HepG2 (cell line): ENCODE measurements at regions of chr4 and their contacts with region 1.

Region 1: DNA sequence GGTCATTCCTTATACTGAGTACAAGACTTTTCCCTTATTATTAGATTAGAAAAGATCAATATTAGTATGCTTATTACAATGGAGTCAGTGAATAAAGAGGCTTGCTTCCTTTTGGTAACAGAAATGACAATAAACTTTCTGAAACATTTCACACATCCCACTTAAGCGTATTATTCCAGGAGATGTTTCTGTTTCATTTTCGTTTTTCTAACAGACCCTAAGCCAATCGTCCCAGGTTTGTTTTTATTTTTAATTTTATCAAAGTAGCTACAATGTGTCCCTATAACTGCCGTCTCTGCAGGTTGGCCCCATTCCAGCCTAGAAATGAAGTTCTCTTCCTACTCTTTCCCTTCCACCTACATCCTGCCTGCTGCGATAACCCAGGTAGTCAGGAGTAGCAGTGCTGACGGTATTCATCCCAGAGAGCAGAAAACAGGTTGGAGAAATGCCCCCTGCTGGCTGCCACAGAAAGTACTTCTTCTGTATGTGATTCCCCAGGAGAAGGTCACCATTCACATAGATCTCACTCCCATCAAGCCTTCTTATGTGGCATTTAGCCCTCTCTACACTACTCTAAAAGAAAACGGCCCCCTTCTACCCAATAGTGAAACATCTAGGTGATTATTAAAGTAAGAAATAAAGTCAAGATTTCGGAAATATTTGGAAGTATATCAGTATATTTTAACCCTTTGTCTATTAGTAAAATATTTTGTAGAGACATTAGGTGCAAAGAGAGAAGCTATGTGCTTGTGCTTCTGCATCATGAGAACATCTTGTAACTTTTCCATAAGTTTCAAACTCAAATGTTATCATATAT is 40.4 kb downstream of the ENPEP start:
- DNase-seq: peak; percentile 68
- ATAC-seq: peak; percentile 100
- H3K4me3 ChIP-seq: peak overlapping the region; percentile 44 to 58 (median 50)
- H3K27ac ChIP-seq: no peak overlapping the region
- H3K4me1 ChIP-seq: peaks cover 8% of the 10 kb centered on the region; the same call in 1 of the 2 replicates
- H3K27me3 ChIP-seq: no peaks in the 10 kb centered on the region
- CTCF ChIP-seq: peak; percentile 84
- EP300 ChIP-seq: no peak
- POLR2A ChIP-seq: no peak
- RAD21 ChIP-seq: peak; percentile 53; the same call in 1 of the 2 replicates

Region 2: GRCh38 chr4:109411964-109412363 is 1104.3 kb before region 1 on chr4:
- CTCF ChIA-PET with region 1: no interaction called
- POLR2A ChIA-PET with region 1: no interaction called
- in situ Hi-C with region 1: loop called (anchors 10 kb)
- intact Hi-C with region 1: no loop called
- DNase-seq: no peak
- ATAC-seq: no peak
- H3K4me3 ChIP-seq: no peak overlapping the region
- H3K27ac ChIP-seq: no peak overlapping the region
- H3K4me1 ChIP-seq: no peaks in the 10 kb centered on the region
- H3K27me3 ChIP-seq: no peaks in the 10 kb centered on the region
- CTCF ChIP-seq: no peak
- EP300 ChIP-seq: no peak
- POLR2A ChIP-seq: no peak
- RAD21 ChIP-seq: no peak

Region 3: GRCh38 chr4:109998867-109999584 is 517.3 kb before region 1 on chr4:
- CTCF ChIA-PET with region 1: interaction called, 100 read pairs
- POLR2A ChIA-PET with region 1: no interaction called
- in situ Hi-C with region 1: no loop called
- intact Hi-C with region 1: loop called (anchors 1 kb)
- DNase-seq: peak; percentile 73
- ATAC-seq: peak; percentile 95
- H3K4me3 ChIP-seq: no peak overlapping the region
- H3K27ac ChIP-seq: no peak overlapping the region
- H3K4me1 ChIP-seq: peaks cover 8% of the 10 kb centered on the region; the same call in 1 of the 2 replicates
- H3K27me3 ChIP-seq: no peaks in the 10 kb centered on the region
- CTCF ChIP-seq: peak; percentile 79
- EP300 ChIP-seq: no peak
- POLR2A ChIP-seq: no peak
- RAD21 ChIP-seq: peak; percentile 72

Region 4: DNA sequence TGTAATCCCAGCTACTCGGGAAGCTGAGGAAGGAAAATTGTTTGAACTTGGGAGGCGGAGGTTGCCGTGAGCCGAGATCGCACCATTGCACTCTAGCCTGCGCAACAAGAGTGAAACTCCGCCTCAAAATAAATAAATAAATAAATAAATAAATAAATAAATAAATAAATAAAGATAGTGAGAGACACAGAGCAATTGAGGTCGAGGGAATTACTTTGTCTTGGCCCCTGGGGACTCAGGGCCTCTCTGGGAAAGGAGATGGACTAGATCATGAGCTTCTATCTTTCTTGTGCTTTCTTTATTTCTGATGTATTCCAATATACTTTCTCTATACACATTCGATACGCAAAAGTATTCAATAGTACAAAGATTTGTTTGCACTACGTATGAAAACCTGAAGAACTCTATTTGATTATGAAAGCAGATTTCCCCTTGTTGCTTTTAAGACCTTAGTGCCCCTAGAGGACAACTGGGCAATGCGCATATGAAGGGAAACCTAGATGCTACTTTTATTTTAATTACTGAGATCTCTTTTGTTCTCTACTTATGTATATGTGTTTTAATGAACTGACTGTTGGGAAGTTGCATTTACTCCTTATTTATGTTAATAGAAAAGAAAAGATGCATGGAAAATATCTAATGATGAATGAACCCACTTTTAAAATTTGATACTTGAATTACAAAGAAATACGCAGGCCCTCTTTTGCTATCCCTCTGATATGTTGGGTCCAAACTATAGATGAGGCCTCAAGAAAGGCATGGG is 305.1 kb before region 1 on chr4:
- CTCF ChIA-PET with region 1: no interaction called
- POLR2A ChIA-PET with region 1: no interaction called
- in situ Hi-C with region 1: no loop called
- intact Hi-C with region 1: loop called (anchors 1 kb)
- DNase-seq: peak; percentile 53
- ATAC-seq: peak; percentile 81
- H3K4me3 ChIP-seq: peak overlapping the region in 1 of 3 experiments; percentile 15; a peak in 2 of 6 replicates
- H3K27ac ChIP-seq: no peak overlapping the region
- H3K4me1 ChIP-seq: no peaks in the 10 kb centered on the region
- H3K27me3 ChIP-seq: no peaks in the 10 kb centered on the region
- CTCF ChIP-seq: peak; percentile 56
- EP300 ChIP-seq: no peak
- POLR2A ChIP-seq: no peak
- RAD21 ChIP-seq: 0 out of 2 replicates have a peak, but pooled peaks have one; percentile 25

Region 5: GRCh38 chr4:110344162-110344561 is 172.2 kb before region 1 on chr4:
- CTCF ChIA-PET with region 1: interaction called, 8 read pairs
- POLR2A ChIA-PET with region 1: no interaction called
- in situ Hi-C with region 1: loop called (anchors 10 kb)
- intact Hi-C with region 1: loop called (anchors 1 kb)
- DNase-seq: no peak
- ATAC-seq: peak; percentile 66
- H3K4me3 ChIP-seq: no peak overlapping the region
- H3K27ac ChIP-seq: no peak overlapping the region
- H3K4me1 ChIP-seq: no peaks in the 10 kb centered on the region
- H3K27me3 ChIP-seq: no peaks in the 10 kb centered on the region
- CTCF ChIP-seq: 0 out of 2 replicates have a peak, but pooled peaks have one; percentile 21
- EP300 ChIP-seq: no peak
- POLR2A ChIP-seq: no peak
- RAD21 ChIP-seq: no peak

Region 6: DNA sequence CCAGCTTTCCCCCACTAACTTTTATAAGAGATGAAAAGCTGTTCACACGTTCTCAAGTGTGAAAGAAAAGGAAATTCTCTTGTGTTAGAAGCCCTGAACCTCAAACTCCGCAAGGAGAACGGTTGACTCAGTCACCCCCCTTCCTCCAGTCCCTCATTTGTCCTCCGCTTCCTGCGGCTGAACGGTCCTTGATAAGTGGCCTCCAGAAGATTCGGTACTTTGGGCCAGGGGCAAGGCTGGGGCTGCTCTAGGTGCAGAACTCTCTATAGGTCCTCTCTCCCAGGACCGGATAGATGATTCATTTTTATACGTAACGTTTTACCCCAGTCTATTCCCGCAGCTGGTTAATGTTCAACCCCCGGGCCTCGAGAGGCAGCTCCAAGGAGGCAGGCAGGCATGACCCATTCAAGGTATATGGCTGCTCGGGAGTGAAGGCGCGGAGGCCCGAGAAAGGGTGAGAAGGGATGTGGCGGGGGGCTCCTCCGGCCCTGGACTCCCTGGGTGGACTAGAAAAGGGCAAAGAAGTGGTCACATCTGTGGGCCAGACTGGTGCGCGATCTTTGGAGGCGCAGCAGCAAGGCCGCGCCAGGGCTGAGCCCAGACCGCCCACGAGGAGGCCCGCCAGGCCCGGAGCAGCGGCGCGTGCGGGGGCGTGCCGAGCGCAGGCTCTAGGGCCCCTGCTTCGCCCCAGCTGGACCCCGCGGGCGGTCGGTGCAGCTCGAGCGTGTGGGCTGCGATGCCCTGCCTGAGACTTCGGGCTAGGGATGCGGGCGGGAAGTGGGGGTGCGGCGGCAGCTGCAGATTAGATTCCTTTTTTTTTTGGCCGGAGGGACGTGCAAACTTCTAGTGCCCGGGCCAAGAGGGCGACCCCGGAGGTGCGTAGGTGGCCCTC is 94.9 kb after region 1 on chr4:
- CTCF ChIA-PET with region 1: no interaction called
- POLR2A ChIA-PET with region 1: no interaction called
- in situ Hi-C with region 1: no loop called
- intact Hi-C with region 1: no loop called
- DNase-seq: no peak
- ATAC-seq: peak; percentile 42
- H3K4me3 ChIP-seq: no peak overlapping the region
- H3K27ac ChIP-seq: no peak overlapping the region
- H3K4me1 ChIP-seq: 0 out of 2 replicates have a peak, but pooled peaks cover 7% of the 10 kb centered on the region
- H3K27me3 ChIP-seq: peaks cover 3 to 45% of the 10 kb centered on the region in 2 experiments; a peak in 4 of 5 replicates
- CTCF ChIP-seq: no peak
- EP300 ChIP-seq: no peak
- POLR2A ChIP-seq: no peak
- RAD21 ChIP-seq: no peak

Region 7: DNA sequence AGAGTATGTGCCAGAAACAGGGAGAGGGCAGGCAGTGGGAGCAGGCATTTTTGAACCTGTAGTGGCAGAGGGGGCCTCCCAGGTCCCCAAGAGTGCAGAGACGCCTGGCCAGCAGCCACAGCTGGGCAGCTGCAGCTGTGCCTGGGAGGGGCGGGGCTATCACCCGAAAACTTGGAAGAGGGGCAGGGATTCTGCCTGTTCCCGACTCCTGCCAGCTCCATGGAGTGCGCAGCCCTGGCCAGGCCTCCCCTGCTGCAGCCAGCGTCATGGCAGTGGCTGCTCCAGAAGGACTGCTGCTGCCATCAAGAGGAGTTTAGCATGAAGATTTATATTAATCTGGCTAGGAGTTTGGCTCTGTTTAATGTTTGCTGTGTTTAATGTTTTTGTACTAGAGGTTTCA is 638.6 kb after region 1 on chr4:
- CTCF ChIA-PET with region 1: no interaction called
- POLR2A ChIA-PET with region 1: no interaction called
- in situ Hi-C with region 1: no loop called
- intact Hi-C with region 1: no loop called
- DNase-seq: no peak
- ATAC-seq: no peak
- H3K4me3 ChIP-seq: no peak overlapping the region
- H3K27ac ChIP-seq: no peak overlapping the region
- H3K4me1 ChIP-seq: no peaks in the 10 kb centered on the region
- H3K27me3 ChIP-seq: no peaks in the 10 kb centered on the region
- CTCF ChIP-seq: no peak
- EP300 ChIP-seq: no peak
- POLR2A ChIP-seq: no peak
- RAD21 ChIP-seq: no peak